Left ventricle myocardium inferior (tissue), 1 donor: ENCODE measurements at regions of chr17 and their contacts with region 1.

Region 1: DNA sequence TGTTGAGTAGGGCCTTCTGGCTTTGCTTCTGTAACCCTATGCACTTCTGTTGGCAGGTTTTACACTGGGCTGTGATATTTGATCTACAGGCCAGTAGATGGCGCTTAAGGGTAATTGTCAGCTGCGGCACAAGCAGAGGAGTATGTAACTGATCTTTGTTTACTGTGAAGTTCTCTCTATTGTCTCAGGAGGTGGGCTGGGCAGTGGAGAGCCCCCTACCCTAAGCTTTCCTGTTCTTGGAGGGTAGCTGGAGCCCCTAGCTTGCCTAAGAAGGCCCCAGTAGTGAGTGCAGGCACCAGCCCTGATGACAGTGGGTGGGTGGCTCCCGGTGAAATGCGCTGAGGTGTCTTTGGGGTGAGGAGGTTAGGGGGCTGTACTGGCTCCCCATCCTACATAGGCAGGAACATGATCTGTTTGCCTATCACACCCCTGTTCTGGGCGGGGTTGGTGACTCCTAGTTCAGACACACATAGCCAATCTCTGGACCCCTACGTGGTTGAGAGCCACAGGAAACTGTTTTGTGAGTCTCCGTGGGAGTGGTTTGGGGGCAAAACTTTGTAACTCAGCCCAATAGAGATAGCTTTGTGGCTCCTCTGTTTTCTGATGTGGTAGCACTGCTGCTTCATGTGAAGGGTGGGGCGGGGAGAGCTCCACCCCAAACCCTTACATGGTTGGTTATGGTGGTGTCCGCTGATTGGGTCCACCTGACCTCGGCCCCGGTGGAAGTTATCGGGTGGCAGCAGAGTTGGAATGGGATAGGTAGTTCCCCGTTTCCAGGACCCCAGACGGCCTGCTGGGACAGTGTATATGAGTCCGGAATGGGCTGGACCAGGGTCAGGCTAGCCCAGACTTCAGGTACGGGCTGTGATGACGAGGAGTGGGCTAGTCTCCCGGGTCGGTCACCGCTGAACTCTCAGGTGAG is 60.4 kb downstream of the SLFN11 start:
- DNase-seq: peak; percentile 24
- H3K4me3 ChIP-seq: peak overlapping the region; percentile 66
- H3K27ac ChIP-seq: peak overlapping the region; percentile 88
- H3K4me1 ChIP-seq: peaks cover 37% of the 10 kb centered on the region
- H3K27me3 ChIP-seq: no peaks in the 10 kb centered on the region
- CTCF ChIP-seq: peak; percentile 88

Region 2: GRCh38 chr17:35352284-35352683 is 39.2 kb after region 1 on chr17:
- intact Hi-C with region 1: no loop called
- DNase-seq: no peak
- H3K4me3 ChIP-seq: no peak overlapping the region
- H3K27ac ChIP-seq: no peak overlapping the region
- H3K4me1 ChIP-seq: peaks cover 4% of the 10 kb centered on the region
- H3K27me3 ChIP-seq: peaks cover 21% of the 10 kb centered on the region
- CTCF ChIP-seq: no peak

Region 3: DNA sequence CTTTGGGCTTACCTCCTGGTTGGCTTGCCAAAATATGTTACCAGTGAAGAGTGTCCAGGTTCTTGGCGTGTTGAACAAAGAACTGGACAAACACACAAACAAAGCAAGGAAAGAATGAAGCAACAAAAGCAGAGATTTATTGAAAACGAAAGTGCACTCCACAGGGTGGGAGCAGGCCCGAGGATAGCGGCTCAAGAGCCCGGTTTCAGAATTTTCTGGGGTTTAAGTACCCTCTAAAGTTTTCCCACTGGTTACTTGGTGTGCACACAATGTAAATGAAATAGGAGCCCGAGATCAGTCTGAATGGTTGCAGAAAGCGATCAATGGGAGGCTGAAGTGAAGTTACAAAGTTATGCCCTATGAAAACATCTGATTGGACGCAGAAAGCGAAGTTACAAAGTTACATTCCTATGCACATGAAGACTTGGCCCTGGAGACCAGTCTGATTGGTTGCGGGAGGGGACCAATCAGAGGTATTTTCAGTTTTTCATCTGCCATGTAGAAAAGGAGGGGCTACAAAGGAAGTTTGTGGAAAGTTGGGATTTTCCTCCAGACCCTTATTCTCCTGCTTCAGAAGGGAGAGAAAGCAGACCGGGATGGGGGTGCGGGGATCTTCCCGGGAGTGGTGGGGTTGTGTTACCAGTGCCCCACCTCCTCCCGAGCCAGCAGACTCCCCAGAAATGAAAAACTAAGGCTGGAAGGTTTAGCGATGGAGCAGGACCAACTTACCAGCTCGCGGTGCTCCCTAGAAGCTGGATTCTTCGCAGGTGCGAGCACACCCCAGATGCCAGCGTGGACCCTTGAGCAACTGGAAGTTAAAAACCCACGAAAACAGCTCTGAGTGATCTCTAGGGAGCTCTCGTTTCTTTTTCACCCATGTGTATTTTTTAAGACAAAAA is 119.4 kb after region 1 on chr17 and contains the start of gene SLFN12:
- intact Hi-C with region 1: loop called (anchors 2 kb)
- DNase-seq: peak; percentile 45
- H3K4me3 ChIP-seq: peak within 1 kb of the TSS; percentile 70
- H3K27ac ChIP-seq: peak within 1 kb of the TSS; percentile 93
- H3K4me1 ChIP-seq: peaks cover 34% of the 10 kb centered on the region
- H3K27me3 ChIP-seq: no peaks in the 10 kb centered on the region
- CTCF ChIP-seq: no peak
- total RNA-seq, gene SLFN12: 3.7 TPM

Region 4: GRCh38 chr17:35529866-35530265 is 216.8 kb after region 1 on chr17:
- intact Hi-C with region 1: loop called (anchors 5 kb)
- DNase-seq: no peak
- H3K4me3 ChIP-seq: no peak overlapping the region
- H3K27ac ChIP-seq: no peak overlapping the region
- H3K4me1 ChIP-seq: no peaks in the 10 kb centered on the region
- H3K27me3 ChIP-seq: no peaks in the 10 kb centered on the region
- CTCF ChIP-seq: no peak